CD4-positive, alpha-beta memory T cell (primary cell): ENCODE measurements at regions of chr3 and their contacts with region 1.

Region 1: GRCh38 chr3:70550723-70551319 is 238.4 kb upstream of the MDFIC2 start:
- DNase-seq: peak; percentile 54 to 62 (median 60)
- H3K4me3 ChIP-seq: no peak overlapping the region
- H3K4me3 Mint-ChIP-seq: no peak overlapping the region
- H3K27ac ChIP-seq: no peak overlapping the region
- H3K27ac Mint-ChIP-seq: no peak overlapping the region
- H3K4me1 ChIP-seq: no peaks in the 10 kb centered on the region
- H3K4me1 Mint-ChIP-seq: no peaks in the 10 kb centered on the region
- H3K27me3 ChIP-seq: peaks cover 3% of the 10 kb centered on the region
- H3K27me3 Mint-ChIP-seq: peaks cover 4% of the 10 kb centered on the region in 2 donors

Region 2: GRCh38 chr3:70457002-70457401 is 93.8 kb before region 1 on chr3:
- CTCF ChIA-PET with region 1: no interaction called
- POLR2A ChIA-PET with region 1: no interaction called
- intact Hi-C with region 1: no loop called
- DNase-seq: no peak
- H3K4me3 ChIP-seq: no peak overlapping the region
- H3K4me3 Mint-ChIP-seq: no peak overlapping the region
- H3K27ac ChIP-seq: no peak overlapping the region
- H3K27ac Mint-ChIP-seq: no peak overlapping the region
- H3K4me1 ChIP-seq: no peaks in the 10 kb centered on the region
- H3K4me1 Mint-ChIP-seq: no peaks in the 10 kb centered on the region
- H3K27me3 ChIP-seq: no peaks in the 10 kb centered on the region
- H3K27me3 Mint-ChIP-seq: peaks cover 5 to 6% of the 10 kb centered on the region in 2 donors

Region 3: DNA sequence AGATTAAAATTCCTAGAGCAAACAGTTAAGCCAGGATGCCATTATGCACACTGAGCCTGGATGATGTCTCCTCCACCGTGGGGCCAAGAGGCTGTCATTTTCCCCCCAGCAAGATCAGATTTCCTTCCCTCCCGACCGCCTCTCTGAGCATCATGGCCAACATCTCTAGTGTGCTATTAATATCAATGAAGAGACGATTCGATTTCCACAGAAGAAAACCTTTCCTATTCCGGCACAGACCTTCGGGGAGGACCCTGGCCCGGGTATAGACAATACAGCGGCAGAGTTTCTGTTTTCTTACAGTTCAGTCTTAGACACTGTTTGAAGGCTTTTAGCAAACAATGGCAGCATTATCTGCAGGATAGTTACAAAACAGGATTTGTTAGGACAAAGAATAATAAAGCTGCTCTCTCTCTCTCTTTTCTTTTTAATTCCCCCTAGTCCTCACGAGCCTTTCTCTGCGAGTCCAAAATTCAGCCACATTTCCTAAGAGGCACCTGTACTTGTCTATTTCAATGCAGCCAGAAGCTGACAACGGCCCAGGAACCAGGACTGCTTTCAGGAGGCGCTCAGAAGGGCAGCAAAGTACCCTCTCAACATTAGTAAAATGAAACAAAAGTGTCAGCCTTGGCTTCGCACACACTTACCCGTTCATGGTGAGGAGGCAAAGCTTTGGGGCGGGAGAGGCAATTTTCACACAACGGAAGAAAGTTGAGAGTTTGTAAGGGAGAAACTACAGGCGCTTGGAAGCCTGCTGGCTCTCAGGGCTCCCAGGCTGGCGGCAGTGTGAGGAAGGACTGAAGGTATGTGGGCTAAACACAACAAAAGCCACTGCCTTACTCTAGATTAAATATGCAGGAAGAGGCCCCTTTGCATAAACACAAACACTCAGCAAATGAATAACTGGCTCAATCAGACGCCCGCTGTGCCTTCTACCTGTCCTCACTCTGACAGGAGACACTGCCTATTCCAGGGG is 754.7 kb after region 1 on chr3:
- CTCF ChIA-PET with region 1: interaction called, 3 read pairs
- POLR2A ChIA-PET with region 1: no interaction called
- intact Hi-C with region 1: loop called (anchors 2 kb)
- DNase-seq: peak in 2 of 5 donors; percentile 14 to 15
- H3K4me3 ChIP-seq: peak overlapping the region; percentile 21 to 30
- H3K4me3 Mint-ChIP-seq: peak overlapping the region; percentile 82 to 96 (median 88)
- H3K27ac ChIP-seq: peak overlapping the region; percentile 11
- H3K27ac Mint-ChIP-seq: peak overlapping the region; percentile 81 to 96 (median 88)
- H3K4me1 ChIP-seq: peaks cover 80% of the 10 kb centered on the region
- H3K4me1 Mint-ChIP-seq: peaks cover 62 to 92% (median 76%) of the 10 kb centered on the region in 4 donors
- H3K27me3 ChIP-seq: no peaks in the 10 kb centered on the region
- H3K27me3 Mint-ChIP-seq: no peaks in the 10 kb centered on the region

Region 4: DNA sequence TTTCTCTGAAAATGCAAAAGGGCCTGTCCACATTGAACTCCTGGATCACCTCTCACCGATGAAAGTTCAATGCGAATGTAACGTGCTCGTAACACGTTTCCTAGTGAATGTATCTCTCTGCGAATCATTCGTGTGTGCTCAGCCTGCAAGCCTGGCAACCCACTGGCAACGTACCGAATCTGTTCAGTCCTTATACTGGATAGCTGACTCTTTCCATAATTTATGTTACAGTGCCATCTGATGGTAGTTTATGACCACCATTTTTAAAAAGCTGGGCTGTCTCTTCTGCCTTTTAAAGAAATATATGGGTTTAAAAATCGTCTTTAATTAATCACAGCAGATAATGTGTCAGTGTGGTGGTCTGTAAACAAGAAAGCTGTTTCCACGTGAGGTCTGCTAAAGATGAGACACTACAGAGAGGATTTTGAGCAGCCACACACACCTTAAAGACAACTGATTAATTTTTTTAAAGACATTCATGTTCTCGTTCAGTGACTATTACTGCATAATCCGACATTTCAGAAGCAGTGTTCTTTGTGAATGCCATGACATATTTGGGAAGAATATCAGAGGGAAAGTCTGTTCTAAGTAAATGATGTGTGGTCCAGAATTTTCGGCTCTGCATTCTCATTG is 1102.1 kb after region 1 on chr3:
- CTCF ChIA-PET with region 1: interaction called, 8 read pairs
- POLR2A ChIA-PET with region 1: no interaction called
- intact Hi-C with region 1: loop called (anchors 1 kb)
- DNase-seq: peak in 4 of 5 donors; percentile 5 to 18 (median 12)
- H3K4me3 ChIP-seq: no peak overlapping the region
- H3K4me3 Mint-ChIP-seq: no peak overlapping the region
- H3K27ac ChIP-seq: no peak overlapping the region
- H3K27ac Mint-ChIP-seq: no peak overlapping the region
- H3K4me1 ChIP-seq: no peaks in the 10 kb centered on the region
- H3K4me1 Mint-ChIP-seq: peaks cover 0 to 13% (median 4%) of the 10 kb centered on the region in 4 donors
- H3K27me3 ChIP-seq: no peaks in the 10 kb centered on the region
- H3K27me3 Mint-ChIP-seq: no peaks in the 10 kb centered on the region